ENCODE measurements at regions of chr17 and their contacts with region 1.

Region 1: GRCh38 chr17:76681222-76682137 is 29.3 kb downstream of the MXRA7 start:
- DNase-seq: peak; percentile 87
- H3K4me3 Mint-ChIP-seq: no peak overlapping the region
- H3K27ac Mint-ChIP-seq: no peak overlapping the region
- H3K4me1 Mint-ChIP-seq: peaks cover 7% of the 10 kb centered on the region
- H3K27me3 Mint-ChIP-seq: peaks cover 41% of the 10 kb centered on the region

Region 2: DNA sequence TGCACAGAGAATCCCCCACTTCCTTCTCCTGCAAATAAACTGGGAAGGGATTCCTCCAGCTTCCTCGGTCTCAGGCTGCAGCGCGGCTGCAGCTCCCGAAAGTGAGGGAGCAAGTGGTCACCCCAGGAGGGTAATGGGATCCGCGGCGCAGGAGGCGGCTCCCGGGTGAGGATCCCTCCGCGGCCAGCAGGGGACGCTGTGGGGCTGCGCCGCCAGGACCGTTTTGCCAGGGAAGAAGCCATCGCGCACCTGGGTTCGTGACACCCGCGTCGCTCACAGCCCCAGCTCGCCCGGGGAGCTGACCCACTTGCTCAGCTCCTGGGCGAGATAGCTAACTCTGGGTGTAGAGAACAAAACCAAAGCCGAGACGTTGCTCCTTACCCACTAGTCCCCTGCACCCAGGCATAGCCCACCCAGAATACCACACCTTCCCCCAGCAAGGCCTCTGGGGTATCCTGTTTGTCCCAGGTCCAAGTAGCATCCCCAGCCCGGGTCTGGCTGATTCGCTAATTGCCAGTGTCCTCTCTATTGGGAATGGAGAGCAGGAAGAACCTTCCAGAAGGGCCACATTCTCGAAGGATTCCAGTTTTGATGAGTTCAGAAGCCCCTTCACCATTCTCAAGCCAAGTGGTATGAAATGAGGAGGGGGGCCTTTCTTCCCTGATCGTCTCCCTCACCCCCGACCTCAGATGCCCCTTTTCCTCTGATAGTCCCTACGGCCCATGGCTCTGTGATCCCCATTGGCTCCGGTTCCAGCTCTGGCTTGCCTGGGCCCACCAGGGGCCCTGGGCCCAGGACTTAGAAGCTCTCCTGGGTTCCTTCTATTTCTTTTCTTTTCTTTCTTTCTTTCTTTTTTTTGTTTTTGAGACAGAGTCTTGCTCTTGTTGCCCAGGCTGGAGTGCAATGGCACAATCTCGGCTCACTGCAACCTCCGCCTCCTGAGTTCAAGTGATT is 158.1 kb before region 1 on chr17:
- CTCF ChIA-PET with region 1: interaction called, 34 read pairs
- DNase-seq: peak; percentile 86
- H3K4me3 Mint-ChIP-seq: no peak overlapping the region
- H3K27ac Mint-ChIP-seq: no peak overlapping the region
- H3K4me1 Mint-ChIP-seq: peaks cover 27% of the 10 kb centered on the region
- H3K27me3 Mint-ChIP-seq: peaks cover 63% of the 10 kb centered on the region

Region 3: DNA sequence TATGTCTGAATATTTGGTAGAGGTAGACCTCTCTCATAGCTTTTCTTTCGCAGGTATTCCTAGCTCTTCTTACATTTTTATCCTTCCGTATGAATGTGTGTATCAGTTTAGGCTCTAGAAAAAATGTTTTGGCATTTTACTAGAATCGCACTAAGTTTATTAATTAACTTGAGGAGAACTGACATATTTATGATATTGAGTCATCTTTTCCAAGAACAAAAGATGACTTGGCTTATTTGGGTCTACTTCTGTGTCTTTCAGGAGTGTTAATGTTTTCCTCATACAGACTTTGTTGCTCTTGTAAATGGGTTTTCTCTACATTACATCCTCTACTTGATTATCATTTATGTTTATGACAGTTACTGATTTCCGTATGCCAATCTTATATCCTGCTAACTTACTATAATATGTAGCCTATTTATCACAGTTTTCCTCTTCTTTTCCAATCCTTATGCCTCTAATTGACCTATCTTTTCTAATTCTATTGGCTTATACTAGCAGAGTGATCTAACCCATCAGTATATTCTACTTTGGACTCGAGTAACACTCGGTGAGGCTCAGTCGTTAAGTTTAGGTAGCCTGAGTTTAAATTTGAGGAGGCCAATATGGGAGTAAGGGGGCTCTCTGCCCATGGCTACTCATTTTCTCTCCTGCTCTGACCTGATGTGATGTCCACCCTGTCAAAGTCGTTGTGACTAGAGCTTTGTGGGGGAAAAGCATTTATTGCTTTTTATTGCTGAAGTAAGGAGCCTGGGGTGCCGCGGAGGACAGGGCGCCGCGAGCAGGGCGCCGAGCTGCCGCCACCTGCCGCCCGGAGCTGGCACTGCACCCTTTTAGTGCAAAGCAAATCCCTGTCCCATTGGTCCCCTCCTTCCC is 58.0 kb before region 1 on chr17:
- CTCF ChIA-PET with region 1: interaction called, 22 read pairs
- DNase-seq: peak; percentile 82
- H3K4me3 Mint-ChIP-seq: no peak overlapping the region
- H3K27ac Mint-ChIP-seq: no peak overlapping the region
- H3K4me1 Mint-ChIP-seq: no peaks in the 10 kb centered on the region
- H3K27me3 Mint-ChIP-seq: peaks cover 34% of the 10 kb centered on the region

Region 4: DNA sequence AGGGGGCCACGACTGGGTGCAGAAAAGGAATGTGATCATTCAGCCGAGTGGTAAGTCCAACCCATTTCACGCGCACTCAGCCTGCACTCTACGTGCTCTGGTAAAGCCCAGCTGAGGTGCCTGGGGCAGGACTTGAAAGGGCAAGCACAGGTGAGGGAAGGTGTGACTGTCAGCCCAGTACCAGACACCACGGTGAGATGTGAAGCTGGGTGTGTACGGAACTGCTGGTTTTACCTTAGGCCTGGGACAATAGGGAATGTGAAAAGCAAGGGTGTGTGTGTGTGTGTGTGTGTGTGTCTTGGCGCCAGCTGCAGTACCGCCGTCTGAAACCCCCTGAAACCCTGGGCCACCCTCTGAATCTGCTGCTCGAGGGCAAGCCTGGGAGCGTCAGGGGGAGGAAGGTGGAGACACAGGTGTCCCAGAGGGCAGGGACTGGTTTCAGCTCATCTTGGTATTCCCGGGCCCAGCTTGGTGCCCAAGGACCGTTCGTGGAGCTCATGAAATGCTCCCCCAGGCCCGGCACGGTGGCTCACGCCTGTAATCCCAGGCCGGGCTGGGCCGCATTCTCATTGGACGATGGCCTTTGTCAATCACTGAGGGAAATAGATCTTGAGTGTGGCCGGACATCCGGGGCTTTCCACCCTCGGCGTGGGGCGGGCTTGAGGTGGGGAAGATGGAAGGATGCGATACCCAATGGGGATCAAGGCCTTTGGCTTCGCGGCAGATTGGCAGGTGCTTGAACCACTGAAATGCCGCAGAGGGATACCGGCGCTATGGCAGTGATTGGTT is 10.2 kb before region 1 on chr17:
- CTCF ChIA-PET with region 1: interaction called, 13 read pairs
- DNase-seq: peak; percentile 100
- H3K4me3 Mint-ChIP-seq: peak overlapping the region; percentile 92
- H3K27ac Mint-ChIP-seq: peak overlapping the region; percentile 95
- H3K4me1 Mint-ChIP-seq: peaks cover 39% of the 10 kb centered on the region
- H3K27me3 Mint-ChIP-seq: peaks cover 28% of the 10 kb centered on the region

Region 5: DNA sequence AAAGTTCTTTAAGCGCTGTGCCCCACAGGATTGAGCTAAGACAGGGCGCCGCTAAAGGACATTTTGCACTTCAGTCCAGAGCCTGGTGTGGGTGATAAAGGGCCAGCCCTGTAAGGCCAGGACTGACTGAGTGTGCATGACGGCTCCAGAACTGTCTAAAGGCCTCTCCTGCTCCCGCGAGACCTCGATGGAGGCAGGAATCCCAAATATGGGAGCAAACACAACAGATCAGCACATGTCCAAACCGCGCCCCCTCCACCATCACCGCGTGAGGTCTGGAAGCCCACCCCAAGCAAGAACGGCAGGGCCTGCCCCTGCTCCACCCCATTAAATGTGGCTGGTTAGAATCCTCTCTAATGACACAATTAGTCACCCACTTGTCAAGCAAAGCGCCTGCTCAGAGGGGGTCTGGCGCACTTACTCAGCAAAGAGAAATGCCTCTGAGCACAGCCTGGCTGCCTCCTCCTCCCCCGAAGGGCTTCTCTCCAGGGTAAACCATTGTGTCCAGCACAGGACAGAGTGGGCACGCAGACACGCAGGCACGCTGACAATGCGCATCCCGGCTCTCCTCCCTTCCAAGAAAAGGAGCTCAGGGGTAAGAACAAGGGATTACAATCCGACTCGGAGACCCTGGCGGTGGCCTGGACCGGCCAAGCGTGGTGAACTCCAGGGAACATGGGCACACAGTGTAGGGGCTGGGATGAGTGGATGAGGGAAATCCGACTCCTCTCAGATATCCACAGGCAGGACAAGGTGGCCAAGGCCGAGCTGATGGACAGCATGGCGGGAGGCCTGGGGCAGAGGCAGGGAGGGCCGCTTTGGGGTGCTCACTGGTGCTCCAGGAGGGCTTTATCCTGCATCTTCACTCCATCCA is 27.8 kb after region 1 on chr17:
- CTCF ChIA-PET with region 1: interaction called, 10 read pairs
- DNase-seq: no peak
- H3K4me3 Mint-ChIP-seq: peak overlapping the region; percentile 64
- H3K27ac Mint-ChIP-seq: no peak overlapping the region
- H3K4me1 Mint-ChIP-seq: peaks cover 29% of the 10 kb centered on the region
- H3K27me3 Mint-ChIP-seq: peaks cover 32% of the 10 kb centered on the region